PC-3 (cell line): ENCODE measurements at regions of chr12 and their contacts with region 1.

Region 1: GRCh38 chr12:92170050-92170449 is 24.4 kb upstream of the BTG1 start:
- DNase-seq: peak; percentile 9
- ATAC-seq: peak; percentile 84
- H3K4me3 ChIP-seq: no peak overlapping the region
- H3K27ac ChIP-seq: no peak overlapping the region
- H3K4me1 ChIP-seq: no peaks in the 10 kb centered on the region
- H3K27me3 ChIP-seq: no peaks in the 10 kb centered on the region
- CTCF ChIP-seq: no peak

Region 2: DNA sequence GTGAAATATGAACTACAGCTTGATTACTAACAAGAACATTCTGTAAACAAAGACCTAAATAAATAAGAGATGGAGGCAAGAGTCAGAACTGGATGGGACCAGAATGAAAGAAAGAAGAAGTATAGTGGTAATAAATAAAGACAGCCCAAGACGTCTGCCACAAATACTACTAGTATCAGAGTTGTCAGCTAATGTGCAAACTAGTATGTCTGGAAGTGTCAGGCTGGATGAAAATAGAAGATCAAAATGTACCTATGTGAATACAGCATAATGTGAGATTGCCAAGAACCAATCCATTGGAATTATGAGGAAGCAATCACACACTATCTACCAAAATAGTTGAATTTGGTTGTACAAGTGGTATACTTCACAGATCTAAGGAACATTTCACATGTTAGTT is 377.5 kb before region 1 on chr12:
- CTCF ChIA-PET with region 1: no interaction called
- POLR2A ChIA-PET with region 1: interaction called, 11 read pairs
- intact Hi-C with region 1: no loop called
- DNase-seq: no peak
- ATAC-seq: no peak
- H3K4me3 ChIP-seq: no peak overlapping the region
- H3K27ac ChIP-seq: no peak overlapping the region
- H3K4me1 ChIP-seq: no peaks in the 10 kb centered on the region
- H3K27me3 ChIP-seq: no peaks in the 10 kb centered on the region
- CTCF ChIP-seq: no peak

Region 3: GRCh38 chr12:92226071-92226661 is 56.1 kb after region 1 on chr12:
- CTCF ChIA-PET with region 1: no interaction called
- POLR2A ChIA-PET with region 1: no interaction called
- intact Hi-C with region 1: no loop called
- DNase-seq: no peak
- ATAC-seq: no peak
- H3K4me3 ChIP-seq: no peak overlapping the region
- H3K27ac ChIP-seq: no peak overlapping the region
- H3K4me1 ChIP-seq: peaks cover 13% of the 10 kb centered on the region
- H3K27me3 ChIP-seq: no peaks in the 10 kb centered on the region
- CTCF ChIP-seq: no peak